Sigmoid colon (tissue), 7 donors: ENCODE measurements at regions of chr12 and their contacts with region 1.

Region 1: DNA sequence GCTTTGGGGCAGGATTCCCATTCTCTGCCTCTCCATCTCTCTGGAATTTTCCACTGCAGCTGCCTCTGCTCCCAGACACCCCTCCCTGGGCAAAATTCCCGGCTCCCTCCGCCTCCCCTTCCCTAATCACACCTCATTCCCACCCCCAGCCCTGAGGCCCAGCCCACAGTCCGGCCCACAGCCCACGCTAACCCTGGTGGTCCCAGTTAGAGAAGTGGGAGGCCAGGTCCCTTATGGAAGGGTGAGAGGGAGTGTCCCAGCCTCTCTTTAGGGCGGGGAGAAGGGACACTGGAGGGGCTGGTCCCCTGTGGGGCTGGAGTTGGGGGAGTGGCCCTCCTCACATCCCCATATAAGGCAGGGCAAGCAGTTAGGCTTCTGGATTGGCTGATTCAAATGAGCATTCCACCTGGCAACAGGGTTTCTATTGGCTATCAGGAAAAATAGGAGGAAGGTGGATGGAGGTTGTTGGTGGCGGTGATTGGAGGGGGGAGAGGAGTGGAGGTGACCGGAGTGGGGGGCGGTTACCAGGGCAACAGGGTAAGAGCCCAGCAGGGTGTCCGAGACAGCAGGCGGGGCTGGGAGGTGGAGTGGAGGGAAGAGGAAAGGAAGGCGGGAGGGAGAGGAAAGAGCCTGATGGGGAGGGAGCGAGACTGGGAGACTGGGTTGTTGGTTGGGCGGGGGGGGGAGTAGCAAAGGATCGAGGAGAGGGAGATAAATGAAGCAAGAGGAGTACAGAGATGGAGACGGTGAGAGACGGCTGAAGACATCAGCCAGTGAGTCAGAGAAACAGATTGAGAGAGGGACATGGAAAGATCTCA is 1.9 kb upstream of the PTMS start:
- DNase-seq: peak; percentile 99
- H3K4me3 ChIP-seq: peak overlapping the region in 3 of 4 donors; percentile 14 to 32 (median 24)
- H3K27ac ChIP-seq: peak overlapping the region; percentile 93 to 99 (median 96)
- H3K4me1 ChIP-seq: peaks cover 0 to 48% (median 44%) of the 10 kb centered on the region in 4 donors
- H3K27me3 ChIP-seq: no peaks in the 10 kb centered on the region
- CTCF ChIP-seq: no peak
- EP300 ChIP-seq: no peak
- POLR2A ChIP-seq: peak; percentile 30 to 32

Region 2: GRCh38 chr12:6752921-6753771 is 11.1 kb before region 1 on chr12 and contains the start of gene MLF2:
- intact Hi-C with region 1: loop called (anchors 1 kb)
- DNase-seq: peak; percentile 100
- H3K4me3 ChIP-seq: peak within 1 kb of the TSS; percentile 90 to 96 (median 91)
- H3K27ac ChIP-seq: peak within 1 kb of the TSS; percentile 98 to 99 (median 99)
- H3K4me1 ChIP-seq: peaks cover 0 to 24% (median 19%) of the 10 kb centered on the region in 4 donors
- H3K27me3 ChIP-seq: no peaks in the 10 kb centered on the region
- CTCF ChIP-seq: peak in 1 of 4 experiments; percentile 95
- EP300 ChIP-seq: peak in 1 of 4 donors; percentile 72
- POLR2A ChIP-seq: peak; percentile 96
- total RNA-seq, gene MLF2: 148 to 163 (median 159) TPM

Region 3: DNA sequence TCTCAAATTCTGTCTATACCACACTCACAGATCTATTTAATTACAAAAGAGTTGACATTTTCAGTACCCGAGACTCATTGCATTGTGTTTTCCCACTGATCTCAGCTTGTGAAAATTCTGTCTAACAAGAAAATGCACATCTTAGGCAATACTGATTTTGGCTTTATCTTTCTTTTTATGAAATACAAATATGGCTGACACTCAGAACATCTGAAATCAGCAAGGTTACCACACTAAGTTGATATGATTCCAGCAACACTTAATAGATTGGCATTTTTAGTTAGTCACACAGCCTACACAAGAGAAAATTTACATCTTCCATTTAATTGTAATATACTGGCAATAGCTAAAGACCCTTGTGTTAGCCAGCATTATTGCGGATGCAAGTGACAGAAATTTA is 465.5 kb after region 1 on chr12:
- intact Hi-C with region 1: no loop called
- DNase-seq: no peak
- H3K4me3 ChIP-seq: no peak overlapping the region
- H3K27ac ChIP-seq: no peak overlapping the region
- H3K4me1 ChIP-seq: no peaks in the 10 kb centered on the region
- H3K27me3 ChIP-seq: no peaks in the 10 kb centered on the region
- CTCF ChIP-seq: no peak
- EP300 ChIP-seq: no peak
- POLR2A ChIP-seq: no peak